Activated CD8-positive, alpha-beta T cell treated with anti-CD3 and anti-CD28 coated beads, Interleukin-2, amount 10 ng/mL, durations not matched to agents 7 days and 5 days (primary cell): ENCODE measurements at regions of chr20 and their contacts with region 1.

Region 1: DNA sequence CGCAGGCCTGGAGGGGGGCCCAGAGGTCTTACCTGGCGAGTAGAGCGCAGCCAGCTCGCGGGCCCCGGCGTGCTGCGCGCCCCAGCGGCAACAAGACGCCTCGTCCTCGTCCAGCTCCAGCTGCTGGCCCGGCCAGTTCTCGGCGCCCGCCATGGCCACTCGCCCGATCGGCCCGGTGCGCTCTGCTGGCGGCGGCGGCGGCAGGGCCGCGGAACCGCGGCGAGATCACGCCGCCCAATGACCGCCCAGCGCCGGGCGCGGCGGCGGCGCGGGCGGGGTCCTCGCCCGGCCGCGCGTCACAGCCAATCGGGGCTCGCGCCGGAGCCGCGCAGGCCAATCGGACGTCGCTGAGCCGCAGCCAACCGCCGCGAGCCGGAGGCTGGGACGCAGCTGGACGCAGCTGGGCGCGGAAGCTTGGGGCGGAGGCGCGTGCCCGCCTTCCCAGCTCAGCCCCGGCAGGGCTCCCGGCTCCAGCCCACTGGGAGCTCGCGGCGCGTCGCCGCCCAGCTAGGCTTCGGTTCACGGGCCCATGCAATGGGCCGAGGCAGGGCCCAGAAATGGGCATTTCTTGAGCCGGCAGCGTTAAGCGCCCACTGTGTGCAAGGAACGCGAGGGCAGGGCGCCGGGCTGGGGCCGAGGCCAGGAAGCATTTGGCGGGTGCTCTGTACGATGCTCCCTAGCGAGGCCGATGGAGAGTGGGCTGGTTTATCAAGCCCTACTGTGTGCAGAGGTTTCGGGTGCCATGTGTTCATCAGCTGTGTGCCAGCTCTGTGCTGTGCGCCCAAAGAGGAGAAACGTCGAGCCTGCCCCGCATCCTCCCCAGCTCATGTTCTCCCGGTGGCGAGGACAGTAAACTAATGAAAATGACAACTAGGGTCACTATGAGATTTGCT is at the start of gene PEDS1:
- DNase-seq: peak; percentile 87
- ATAC-seq: peak; percentile 99
- H3K4me3 Mint-ChIP-seq: peak within 1 kb of the TSS; percentile 78
- H3K27ac Mint-ChIP-seq: peak within 1 kb of the TSS; percentile 84
- H3K4me1 Mint-ChIP-seq: peaks cover 43% of the 10 kb centered on the region
- H3K27me3 Mint-ChIP-seq: no peaks in the 10 kb centered on the region
- total RNA-seq, gene PEDS1: 28.7 to 30.2 TPM

Region 2: DNA sequence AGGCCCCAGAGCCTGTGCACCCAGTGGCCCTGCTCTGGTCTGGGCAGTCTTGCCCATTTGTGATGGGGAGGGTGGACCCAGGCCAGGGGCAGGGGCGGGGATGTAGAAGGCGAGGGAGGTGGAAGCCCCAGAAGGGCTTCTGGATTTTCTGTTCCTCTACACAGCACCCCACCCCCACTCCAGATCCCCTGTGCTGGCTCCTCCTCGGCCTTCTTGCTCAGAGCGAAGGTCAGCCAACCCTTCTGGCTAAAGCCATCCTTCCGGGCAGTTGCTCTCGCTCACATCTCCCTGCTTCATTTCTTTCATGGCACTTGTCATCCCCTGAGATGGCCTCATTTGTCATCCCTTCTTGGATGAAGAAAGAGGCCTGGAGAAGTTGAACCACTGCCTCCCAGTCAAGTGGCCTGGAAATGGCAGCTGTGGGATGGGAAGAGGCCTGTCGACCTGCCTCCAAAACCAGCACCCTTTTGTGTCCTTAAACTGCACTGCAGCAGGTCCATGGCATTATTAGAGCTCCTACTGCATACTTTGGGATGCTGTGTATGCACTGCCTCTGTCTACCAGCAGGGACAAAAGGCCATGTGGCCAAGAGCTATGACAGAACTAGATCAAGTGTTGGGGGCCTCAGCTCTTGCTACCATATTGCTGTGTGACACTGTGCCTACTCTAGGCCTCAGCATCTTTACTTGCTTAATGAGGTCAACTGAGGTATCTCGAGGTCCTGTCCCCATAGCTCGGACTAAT is 20.1 kb before region 1 on chr20:
- CTCF ChIA-PET with region 1: interaction called, 21 read pairs
- POLR2A ChIA-PET with region 1: interaction called, 3 read pairs
- DNase-seq: no peak
- ATAC-seq: no peak
- H3K4me3 Mint-ChIP-seq: no peak overlapping the region
- H3K27ac Mint-ChIP-seq: no peak overlapping the region
- H3K4me1 Mint-ChIP-seq: no peaks in the 10 kb centered on the region
- H3K27me3 Mint-ChIP-seq: no peaks in the 10 kb centered on the region

Region 3: GRCh38 chr20:50179507-50180016 is 25.8 kb after region 1 on chr20:
- CTCF ChIA-PET with region 1: interaction called, 12 read pairs
- POLR2A ChIA-PET with region 1: no interaction called
- DNase-seq: no peak
- ATAC-seq: no peak
- H3K4me3 Mint-ChIP-seq: no peak overlapping the region
- H3K27ac Mint-ChIP-seq: no peak overlapping the region
- H3K4me1 Mint-ChIP-seq: no peaks in the 10 kb centered on the region
- H3K27me3 Mint-ChIP-seq: peaks cover 15% of the 10 kb centered on the region